CD8-positive, alpha-beta T cell (primary cell): ENCODE measurements at regions of chr16 and their contacts with region 1.

Region 1: DNA sequence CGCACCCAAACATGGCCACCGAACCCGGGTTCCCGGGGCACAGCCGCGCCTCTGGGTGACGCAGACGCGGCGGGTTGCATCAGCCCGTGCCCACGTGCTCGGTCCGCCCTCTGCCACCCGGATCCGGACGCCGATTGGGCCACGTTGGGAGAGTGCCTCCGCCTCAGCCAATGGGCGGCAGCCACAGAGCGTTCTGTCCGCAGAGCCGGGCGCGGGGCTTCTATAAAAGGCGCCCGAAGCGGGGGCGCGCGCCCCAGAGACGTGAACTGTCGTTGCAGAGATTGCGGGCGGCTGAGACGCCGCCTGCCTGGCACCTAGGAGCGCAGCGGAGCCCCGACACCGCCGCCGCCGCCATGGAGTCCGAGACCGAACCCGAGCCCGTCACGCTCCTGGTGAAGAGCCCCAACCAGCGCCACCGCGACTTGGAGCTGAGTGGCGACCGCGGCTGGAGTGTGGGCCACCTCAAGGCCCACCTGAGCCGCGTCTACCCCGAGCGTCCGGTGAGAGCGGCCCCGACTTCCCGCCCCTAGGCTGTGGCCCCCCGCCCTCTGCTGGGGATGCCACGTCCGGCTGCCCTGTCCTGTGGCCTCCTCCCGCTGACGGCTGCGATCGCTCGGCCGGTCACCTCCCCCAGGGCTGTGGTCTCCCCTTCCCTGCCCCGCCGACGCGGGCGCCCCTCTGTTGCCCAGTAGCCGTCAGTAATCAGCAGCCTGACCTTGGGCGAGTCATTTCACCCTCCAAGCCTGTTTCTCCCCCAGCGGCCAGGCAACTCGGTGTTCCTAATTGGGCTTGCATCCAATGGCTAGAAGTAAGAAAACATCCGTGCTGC is at the start of gene HERPUD1:
- DNase-seq: peak; percentile 98 to 99 (median 99)
- ATAC-seq: peak; percentile 94
- H3K4me3 ChIP-seq: peak within 1 kb of the TSS; percentile 96 to 99
- H3K4me3 Mint-ChIP-seq: peak within 1 kb of the TSS; percentile 98
- H3K27ac ChIP-seq: peak within 1 kb of the TSS; percentile 83 to 95
- H3K27ac Mint-ChIP-seq: peak within 1 kb of the TSS; percentile 98
- H3K4me1 ChIP-seq: peaks cover 16% of the 10 kb centered on the region
- H3K4me1 Mint-ChIP-seq: peaks cover 44% of the 10 kb centered on the region
- H3K27me3 ChIP-seq: no peaks in the 10 kb centered on the region
- H3K27me3 Mint-ChIP-seq: no peaks in the 10 kb centered on the region
- CTCF ChIP-seq: no peak
- total RNA-seq, gene HERPUD1: 191 to 201 TPM

Region 2: GRCh38 chr16:56519459-56520250 is 412.5 kb before region 1 on chr16 and contains the start of gene BBS2:
- CTCF ChIA-PET with region 1: no interaction called
- POLR2A ChIA-PET with region 1: no interaction called
- intact Hi-C with region 1: loop called in 1 of 2 experiments (anchors 10 kb)
- DNase-seq: peak; percentile 84 to 96 (median 92)
- ATAC-seq: peak; percentile 83
- H3K4me3 ChIP-seq: peak within 1 kb of the TSS; percentile 94 to 99
- H3K4me3 Mint-ChIP-seq: peak within 1 kb of the TSS; percentile 86
- H3K27ac ChIP-seq: peak within 1 kb of the TSS; percentile 82 to 92
- H3K27ac Mint-ChIP-seq: peak within 1 kb of the TSS; percentile 92
- H3K4me1 ChIP-seq: peaks cover 32% of the 10 kb centered on the region
- H3K4me1 Mint-ChIP-seq: peaks cover 50% of the 10 kb centered on the region
- H3K27me3 ChIP-seq: no peaks in the 10 kb centered on the region
- H3K27me3 Mint-ChIP-seq: no peaks in the 10 kb centered on the region
- CTCF ChIP-seq: no peak
- total RNA-seq, gene BBS2: 60.6 to 62.1 TPM

Region 3: GRCh38 chr16:56729735-56730662 is 202.1 kb before region 1 on chr16 and contains the start of gene NUP93:
- CTCF ChIA-PET with region 1: no interaction called
- POLR2A ChIA-PET with region 1: no interaction called
- intact Hi-C with region 1: loop called in 1 of 2 experiments (anchors 5 kb)
- DNase-seq: peak; percentile 76 to 94 (median 90)
- ATAC-seq: peak; percentile 94
- H3K4me3 ChIP-seq: peak within 1 kb of the TSS; percentile 79 to 87
- H3K4me3 Mint-ChIP-seq: no peak within 1 kb of the TSS
- H3K27ac ChIP-seq: peak within 1 kb of the TSS; percentile 58 to 81
- H3K27ac Mint-ChIP-seq: peak within 1 kb of the TSS; percentile 90
- H3K4me1 ChIP-seq: peaks cover 34% of the 10 kb centered on the region
- H3K4me1 Mint-ChIP-seq: peaks cover 23% of the 10 kb centered on the region
- H3K27me3 ChIP-seq: no peaks in the 10 kb centered on the region
- H3K27me3 Mint-ChIP-seq: no peaks in the 10 kb centered on the region
- CTCF ChIP-seq: no peak
- total RNA-seq, gene NUP93: 68.2 to 68.5 TPM

Region 4: DNA sequence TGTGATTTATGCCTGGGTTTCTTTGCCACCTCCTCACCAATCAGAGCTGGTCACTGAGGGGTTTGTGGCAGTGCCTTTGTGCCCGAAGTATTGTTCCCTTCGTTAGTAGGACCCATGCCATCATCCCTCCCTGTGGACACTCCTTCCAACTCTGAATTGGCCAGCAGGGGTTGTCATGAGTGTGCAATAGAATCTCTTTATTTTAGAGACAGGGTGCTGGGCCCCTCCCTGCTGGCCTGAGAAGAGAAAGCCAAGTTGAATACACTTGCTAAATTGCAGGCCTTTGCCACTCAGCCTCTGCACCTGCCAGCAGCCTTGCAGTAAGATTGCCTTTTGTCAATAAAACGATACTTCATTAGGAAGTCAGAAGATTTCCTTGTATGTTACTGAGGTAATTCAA is 107.8 kb before region 1 on chr16:
- CTCF ChIA-PET with region 1: no interaction called
- POLR2A ChIA-PET with region 1: no interaction called
- intact Hi-C with region 1: no loop called
- DNase-seq: no peak
- ATAC-seq: no peak
- H3K4me3 ChIP-seq: no peak overlapping the region
- H3K4me3 Mint-ChIP-seq: no peak overlapping the region
- H3K27ac ChIP-seq: no peak overlapping the region
- H3K27ac Mint-ChIP-seq: no peak overlapping the region
- H3K4me1 ChIP-seq: no peaks in the 10 kb centered on the region
- H3K4me1 Mint-ChIP-seq: peaks cover 9% of the 10 kb centered on the region
- H3K27me3 ChIP-seq: no peaks in the 10 kb centered on the region
- H3K27me3 Mint-ChIP-seq: no peaks in the 10 kb centered on the region
- CTCF ChIP-seq: no peak

Region 5: GRCh38 chr16:56919099-56919800 is 12.9 kb before region 1 on chr16:
- CTCF ChIA-PET with region 1: interaction called, 3 read pairs
- POLR2A ChIA-PET with region 1: interaction called, 15 read pairs
- intact Hi-C with region 1: no loop called
- DNase-seq: no peak
- ATAC-seq: no peak
- H3K4me3 ChIP-seq: no peak overlapping the region
- H3K4me3 Mint-ChIP-seq: no peak overlapping the region
- H3K27ac ChIP-seq: no peak overlapping the region
- H3K27ac Mint-ChIP-seq: no peak overlapping the region
- H3K4me1 ChIP-seq: peaks cover 13% of the 10 kb centered on the region
- H3K4me1 Mint-ChIP-seq: peaks cover 12% of the 10 kb centered on the region
- H3K27me3 ChIP-seq: no peaks in the 10 kb centered on the region
- H3K27me3 Mint-ChIP-seq: no peaks in the 10 kb centered on the region
- CTCF ChIP-seq: no peak

Region 6: GRCh38 chr16:56970934-56971767 is 39.0 kb after region 1 on chr16:
- CTCF ChIA-PET with region 1: no interaction called
- POLR2A ChIA-PET with region 1: no interaction called
- intact Hi-C with region 1: no loop called
- DNase-seq: peak in 2 of 9 experiments; percentile 28 to 39
- ATAC-seq: peak; percentile 48
- H3K4me3 ChIP-seq: no peak overlapping the region
- H3K4me3 Mint-ChIP-seq: no peak overlapping the region
- H3K27ac ChIP-seq: no peak overlapping the region
- H3K27ac Mint-ChIP-seq: peak overlapping the region; percentile 63
- H3K4me1 ChIP-seq: peaks cover 53% of the 10 kb centered on the region
- H3K4me1 Mint-ChIP-seq: peaks cover 46% of the 10 kb centered on the region
- H3K27me3 ChIP-seq: no peaks in the 10 kb centered on the region
- H3K27me3 Mint-ChIP-seq: no peaks in the 10 kb centered on the region
- CTCF ChIP-seq: no peak

Region 7: DNA sequence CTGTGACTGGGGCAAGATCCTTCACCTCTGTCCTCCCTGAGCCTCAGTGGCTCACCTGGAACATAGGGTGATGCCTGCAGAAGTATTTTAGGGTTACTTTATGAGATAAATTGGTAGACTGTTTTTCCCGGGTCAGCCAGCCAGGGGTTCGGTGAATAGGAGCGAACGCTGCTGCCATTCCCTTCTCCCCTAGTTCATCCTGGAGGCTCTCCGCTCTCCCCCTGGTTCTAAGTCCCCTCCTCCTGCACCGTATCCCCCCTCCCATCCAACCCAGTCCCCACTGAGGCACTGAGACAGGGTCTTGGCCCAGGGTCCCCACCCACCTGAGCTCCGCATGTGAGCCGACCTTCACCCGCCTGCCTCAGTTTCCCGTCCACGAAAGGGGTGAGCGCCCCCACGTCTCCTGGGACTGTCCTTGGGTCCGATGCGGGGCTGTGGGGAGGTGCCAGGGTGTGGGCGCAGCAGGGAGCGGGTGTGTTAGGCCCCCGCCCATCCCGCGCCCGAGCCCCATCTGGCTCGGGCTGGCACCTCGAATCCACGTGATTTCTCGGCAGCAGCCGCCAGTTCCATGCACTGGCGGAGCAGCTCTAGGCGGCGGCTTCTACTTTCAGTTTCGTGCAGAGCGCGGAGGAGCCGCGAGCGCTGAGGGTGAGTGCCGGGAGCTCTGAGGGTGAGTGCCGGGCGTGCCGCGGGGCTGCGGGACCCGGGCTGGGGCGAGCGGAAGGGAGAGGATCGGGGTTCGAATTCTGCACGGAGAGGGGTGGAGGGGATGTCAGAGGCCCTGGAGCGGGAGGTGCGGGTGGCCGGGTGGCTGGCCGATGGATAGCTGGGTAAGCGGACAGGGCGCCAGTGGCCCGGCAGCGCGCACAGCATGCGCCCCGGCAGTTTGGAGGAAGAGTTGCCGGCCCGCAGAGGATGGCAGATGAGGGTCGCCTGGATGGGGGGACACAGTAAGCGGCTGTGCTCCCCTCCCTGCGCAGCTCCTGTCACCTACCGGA is 57.1 kb after region 1 on chr16 and contains the start of gene NLRC5:
- CTCF ChIA-PET with region 1: no interaction called
- POLR2A ChIA-PET with region 1: interaction called, 3 read pairs
- intact Hi-C with region 1: loop called in 1 of 2 experiments (anchors 2 kb)
- DNase-seq: peak; percentile 79 to 95 (median 89)
- ATAC-seq: peak; percentile 81
- H3K4me3 ChIP-seq: peak within 1 kb of the TSS; percentile 98
- H3K4me3 Mint-ChIP-seq: peak within 1 kb of the TSS; percentile 100
- H3K27ac ChIP-seq: peak within 1 kb of the TSS; percentile 90 to 92
- H3K27ac Mint-ChIP-seq: peak within 1 kb of the TSS; percentile 98
- H3K4me1 ChIP-seq: peaks cover 70% of the 10 kb centered on the region
- H3K4me1 Mint-ChIP-seq: peaks cover 74% of the 10 kb centered on the region
- H3K27me3 ChIP-seq: no peaks in the 10 kb centered on the region
- H3K27me3 Mint-ChIP-seq: no peaks in the 10 kb centered on the region
- CTCF ChIP-seq: no peak
- total RNA-seq, gene NLRC5: 670 to 690 TPM

Region 8: GRCh38 chr16:57013229-57013628 is 81.1 kb after region 1 on chr16:
- CTCF ChIA-PET with region 1: no interaction called
- POLR2A ChIA-PET with region 1: no interaction called
- intact Hi-C with region 1: no loop called
- DNase-seq: no peak
- ATAC-seq: no peak
- H3K4me3 ChIP-seq: no peak overlapping the region
- H3K4me3 Mint-ChIP-seq: peak overlapping the region; percentile 54
- H3K27ac ChIP-seq: peak overlapping the region in 1 of 2 experiments; percentile 89
- H3K27ac Mint-ChIP-seq: peak overlapping the region; percentile 97
- H3K4me1 ChIP-seq: peaks cover 90% of the 10 kb centered on the region
- H3K4me1 Mint-ChIP-seq: peaks cover 83% of the 10 kb centered on the region
- H3K27me3 ChIP-seq: no peaks in the 10 kb centered on the region
- H3K27me3 Mint-ChIP-seq: no peaks in the 10 kb centered on the region
- CTCF ChIP-seq: no peak

Region 9: DNA sequence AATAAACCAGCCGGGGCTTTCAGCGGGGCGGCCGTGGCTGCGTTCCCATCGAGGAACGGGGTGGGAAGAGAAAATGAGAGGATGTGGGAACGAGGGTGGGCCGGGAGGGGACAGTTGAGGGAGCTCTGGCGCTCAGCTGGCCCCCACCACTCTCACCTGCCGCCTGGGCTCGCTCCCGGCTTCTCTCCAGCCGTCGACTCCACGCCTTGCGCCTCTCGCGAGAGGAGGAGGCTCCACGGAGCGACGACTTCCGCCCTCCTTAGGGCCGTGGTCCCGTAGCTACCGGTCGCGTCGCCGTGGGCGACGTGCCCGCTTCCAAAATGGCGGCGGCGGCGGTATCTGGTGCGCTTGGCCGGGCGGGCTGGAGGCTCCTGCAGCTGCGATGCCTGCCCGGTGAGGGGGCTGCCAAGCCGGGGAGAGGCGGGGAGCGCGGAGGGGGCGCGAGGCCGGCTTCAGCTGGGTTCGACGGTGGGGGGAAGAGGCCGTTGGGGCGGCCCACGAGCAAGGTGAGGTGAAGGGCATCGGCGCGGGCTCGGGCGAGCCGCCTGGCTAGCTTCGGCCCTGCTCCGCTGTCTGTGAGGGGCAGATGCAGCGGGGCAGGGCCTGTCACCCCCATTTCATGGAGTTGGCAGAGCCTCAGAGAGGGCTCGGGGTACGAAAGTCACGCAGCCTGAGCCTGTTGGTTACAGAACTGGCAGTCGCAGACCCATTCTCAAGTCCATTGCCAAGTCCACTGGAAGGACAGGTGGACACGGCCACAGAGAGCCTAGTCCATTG is 515.3 kb after region 1 on chr16 and contains the starts of genes CIAPIN1 and COQ9:
- CTCF ChIA-PET with region 1: no interaction called
- POLR2A ChIA-PET with region 1: no interaction called
- intact Hi-C with region 1: loop called in 1 of 2 experiments (anchors 10 kb)
- DNase-seq: peak; percentile 85 to 97 (median 92)
- ATAC-seq: peak; percentile 98
- H3K4me3 ChIP-seq: peak within 1 kb of the TSS; percentile 93 to 96
- H3K4me3 Mint-ChIP-seq: peak within 1 kb of the TSS; percentile 91
- H3K27ac ChIP-seq: peak within 1 kb of the TSS; percentile 79 to 83
- H3K27ac Mint-ChIP-seq: peak within 1 kb of the TSS; percentile 93
- H3K4me1 ChIP-seq: peaks cover 20% of the 10 kb centered on the region
- H3K4me1 Mint-ChIP-seq: peaks cover 53% of the 10 kb centered on the region
- H3K27me3 ChIP-seq: no peaks in the 10 kb centered on the region
- H3K27me3 Mint-ChIP-seq: no peaks in the 10 kb centered on the region
- CTCF ChIP-seq: no peak
- total RNA-seq, gene CIAPIN1: 28.6 to 29.7 TPM
- total RNA-seq, gene COQ9: 8.1 to 11.7 TPM